Activated CD4-positive, alpha-beta memory T cell treated with anti-CD3 and anti-CD28 coated beads for 36 hours (primary cell): ENCODE measurements at regions of chr3 and their contacts with region 1.

Region 1: GRCh38 chr3:32992322-32992692 is 40.9 kb downstream of the CCR4 start:
- DNase-seq: no peak
- H3K4me3 Mint-ChIP-seq: peak overlapping the region; percentile 73
- H3K27ac Mint-ChIP-seq: peak overlapping the region; percentile 92
- H3K4me1 Mint-ChIP-seq: peaks cover 87% of the 10 kb centered on the region
- H3K27me3 Mint-ChIP-seq: no peaks in the 10 kb centered on the region

Region 2: GRCh38 chr3:32960404-32961170 is 31.7 kb before region 1 on chr3:
- CTCF ChIA-PET with region 1: interaction called, 9 read pairs
- POLR2A ChIA-PET with region 1: interaction called, 43 read pairs
- intact Hi-C with region 1: loop called (anchors 1 kb)
- DNase-seq: peak; percentile 54
- H3K4me3 Mint-ChIP-seq: peak overlapping the region; percentile 41
- H3K27ac Mint-ChIP-seq: peak overlapping the region; percentile 97
- H3K4me1 Mint-ChIP-seq: peaks cover 84% of the 10 kb centered on the region
- H3K27me3 Mint-ChIP-seq: no peaks in the 10 kb centered on the region

Region 3: DNA sequence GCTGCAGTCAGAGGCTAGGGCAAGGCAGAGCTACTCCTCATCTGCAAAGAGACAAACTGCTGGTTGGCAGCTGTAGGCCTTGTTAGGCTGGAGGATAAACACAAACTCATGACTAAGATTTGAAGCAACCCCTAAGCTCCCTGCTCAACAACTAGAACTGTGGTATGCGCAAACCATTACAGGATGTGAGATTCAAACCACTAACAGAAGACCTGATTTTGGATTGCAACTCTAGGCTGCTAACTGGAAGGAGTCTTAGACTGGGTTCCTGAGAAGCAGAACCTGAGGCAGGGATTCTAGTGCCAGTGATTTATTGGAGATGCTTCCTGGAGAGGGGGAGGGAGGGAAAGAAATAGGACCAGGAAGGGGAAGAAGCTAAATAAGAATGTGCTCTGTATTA is 18.3 kb before region 1 on chr3:
- CTCF ChIA-PET with region 1: interaction called, 6 read pairs
- POLR2A ChIA-PET with region 1: interaction called, 7 read pairs
- intact Hi-C with region 1: loop called (anchors 1 kb)
- DNase-seq: peak; percentile 54
- H3K4me3 Mint-ChIP-seq: no peak overlapping the region
- H3K27ac Mint-ChIP-seq: peak overlapping the region; percentile 78
- H3K4me1 Mint-ChIP-seq: peaks cover 56% of the 10 kb centered on the region
- H3K27me3 Mint-ChIP-seq: no peaks in the 10 kb centered on the region

Region 4: GRCh38 chr3:33006081-33006480 is 13.8 kb after region 1 on chr3:
- CTCF ChIA-PET with region 1: interaction called, 9 read pairs
- POLR2A ChIA-PET with region 1: interaction called, 26 read pairs
- intact Hi-C with region 1: loop called (anchors 1 kb)
- DNase-seq: peak; percentile 66
- H3K4me3 Mint-ChIP-seq: no peak overlapping the region
- H3K27ac Mint-ChIP-seq: peak overlapping the region; percentile 86
- H3K4me1 Mint-ChIP-seq: peaks cover 72% of the 10 kb centered on the region
- H3K27me3 Mint-ChIP-seq: no peaks in the 10 kb centered on the region

Region 5: GRCh38 chr3:33030802-33031201 is 38.5 kb after region 1 on chr3:
- CTCF ChIA-PET with region 1: interaction called, 8 read pairs
- POLR2A ChIA-PET with region 1: no interaction called
- intact Hi-C with region 1: loop called (anchors 1 kb)
- DNase-seq: peak; percentile 72
- H3K4me3 Mint-ChIP-seq: peak overlapping the region; percentile 36
- H3K27ac Mint-ChIP-seq: peak overlapping the region; percentile 76
- H3K4me1 Mint-ChIP-seq: peaks cover 34% of the 10 kb centered on the region
- H3K27me3 Mint-ChIP-seq: no peaks in the 10 kb centered on the region

Region 6: GRCh38 chr3:33047842-33048834 is 55.8 kb after region 1 on chr3:
- CTCF ChIA-PET with region 1: interaction called, 5 read pairs
- POLR2A ChIA-PET with region 1: interaction called, 8 read pairs
- intact Hi-C with region 1: loop called (anchors 2 kb)
- DNase-seq: peak; percentile 73
- H3K4me3 Mint-ChIP-seq: peak overlapping the region; percentile 52
- H3K27ac Mint-ChIP-seq: peak overlapping the region; percentile 96
- H3K4me1 Mint-ChIP-seq: peaks cover 79% of the 10 kb centered on the region
- H3K27me3 Mint-ChIP-seq: no peaks in the 10 kb centered on the region

Region 7: GRCh38 chr3:33372218-33373081 is 380.1 kb after region 1 on chr3:
- CTCF ChIA-PET with region 1: no interaction called
- POLR2A ChIA-PET with region 1: no interaction called
- intact Hi-C with region 1: no loop called
- DNase-seq: peak; percentile 49
- H3K4me3 Mint-ChIP-seq: no peak overlapping the region
- H3K27ac Mint-ChIP-seq: no peak overlapping the region
- H3K4me1 Mint-ChIP-seq: peaks cover 7% of the 10 kb centered on the region
- H3K27me3 Mint-ChIP-seq: peaks cover 10% of the 10 kb centered on the region